ENCODE measurements at regions of chr1 and their contacts with region 1.

Region 1: GRCh38 chr1:44217809-44218410 is 4.6 kb downstream of the DMAP1 start:
- DNase-seq: peak; percentile 68 to 79 (median 73)
- ATAC-seq: peak; percentile 68 to 77 (median 74)
- H3K4me3 ChIP-seq: no peak overlapping the region
- H3K27ac ChIP-seq: no peak overlapping the region
- H3K4me1 ChIP-seq: peaks cover 0 to 8% (median under 1%) of the 10 kb centered on the region in 4 donors
- H3K27me3 ChIP-seq: no peaks in the 10 kb centered on the region
- CTCF ChIP-seq: peak; percentile 87 to 94 (median 93)
- POLR2A ChIP-seq: no peak

Region 2: GRCh38 chr1:44318097-44319088 is 100.5 kb after region 1 on chr1:
- intact Hi-C with region 1: loop called (anchors 2 to 10 kb)
- DNase-seq: peak in 1 of 3 donors; percentile 53
- ATAC-seq: peak; percentile 57 to 77 (median 72)
- H3K4me3 ChIP-seq: no peak overlapping the region
- H3K27ac ChIP-seq: no peak overlapping the region
- H3K4me1 ChIP-seq: no peaks in the 10 kb centered on the region
- H3K27me3 ChIP-seq: no peaks in the 10 kb centered on the region
- CTCF ChIP-seq: peak; percentile 68 to 94 (median 90)
- POLR2A ChIP-seq: no peak

Region 3: DNA sequence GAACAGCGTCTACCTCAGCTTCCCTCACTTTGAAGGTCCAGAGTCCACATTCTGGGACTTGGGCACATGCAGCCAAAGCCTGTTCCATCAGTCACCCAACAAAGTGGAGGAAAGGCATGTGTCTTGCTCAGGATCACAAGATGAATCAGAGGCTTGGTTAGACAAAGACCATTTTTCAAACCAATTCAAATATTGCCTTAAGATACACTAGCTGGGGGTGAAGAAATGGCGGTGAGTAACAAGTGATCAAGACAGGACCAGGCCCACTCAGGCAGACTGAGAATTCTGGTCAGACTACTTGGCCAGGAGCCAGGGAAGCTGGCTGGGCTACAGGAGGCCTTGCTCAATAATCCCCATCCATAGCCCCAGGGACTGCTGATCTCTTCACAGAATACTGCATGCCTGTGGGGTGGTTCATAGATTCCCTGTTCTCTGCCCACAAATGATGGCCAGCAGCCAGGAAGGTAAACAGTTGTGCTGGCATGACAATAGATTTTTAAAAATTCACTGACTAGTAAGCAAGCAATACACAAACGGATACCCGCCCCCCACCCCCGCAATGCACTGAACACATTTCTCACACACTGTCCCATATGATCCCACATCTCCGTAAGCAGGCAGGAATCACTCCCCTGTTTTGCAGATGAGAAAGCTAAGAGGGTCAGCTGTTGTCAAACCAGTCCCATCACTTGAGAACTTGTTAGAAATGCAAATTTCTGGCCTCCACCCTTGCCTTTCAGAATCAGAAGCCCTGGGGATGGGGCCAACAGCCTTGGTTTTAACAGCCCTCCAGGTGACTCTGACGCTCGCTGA is 110.0 kb after region 1 on chr1:
- intact Hi-C with region 1: loop called in 1 of 2 experiments (anchors 10 kb)
- DNase-seq: peak; percentile 84 to 86 (median 86)
- ATAC-seq: peak; percentile 92 to 97 (median 96)
- H3K4me3 ChIP-seq: no peak overlapping the region
- H3K27ac ChIP-seq: no peak overlapping the region
- H3K4me1 ChIP-seq: peaks cover 0 to 14% (median 9%) of the 10 kb centered on the region in 4 donors
- H3K27me3 ChIP-seq: no peaks in the 10 kb centered on the region
- CTCF ChIP-seq: no peak
- POLR2A ChIP-seq: no peak

Measured in right lobe of liver (tissue), 6 donors.